ENCODE measurements at regions of chr2 and their contacts with region 1.

Region 1: GRCh38 chr2:25692143-25692542 is 18.8 kb upstream of the DTNB start:
- DNase-seq: peak; percentile 79
- ATAC-seq: peak; percentile 59
- H3K4me3 ChIP-seq: no peak overlapping the region
- H3K27ac ChIP-seq: no peak overlapping the region
- H3K4me1 ChIP-seq: no peaks in the 10 kb centered on the region; the same call in 1 of the 2 replicates
- H3K27me3 ChIP-seq: no peaks in the 10 kb centered on the region
- CTCF ChIP-seq: no peak

Region 2: DNA sequence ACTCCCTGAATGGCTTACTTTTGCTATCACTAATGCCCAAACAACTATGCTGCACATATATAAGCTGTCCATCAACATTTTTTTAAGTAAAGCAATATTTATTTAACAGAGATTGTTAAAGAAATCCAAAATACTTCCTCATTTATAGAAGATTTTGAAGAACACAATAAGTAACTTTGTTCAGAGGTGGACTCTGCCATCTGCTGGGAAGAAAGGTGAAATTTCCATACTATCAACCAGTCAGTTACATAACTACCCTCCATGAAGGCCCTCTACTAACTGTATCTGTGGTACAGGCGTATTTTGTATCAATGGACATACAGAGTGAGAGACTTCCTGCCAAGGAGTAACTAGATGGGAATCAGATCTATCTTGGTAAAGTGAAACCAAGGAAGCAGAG is 124.7 kb before region 1 on chr2:
- CTCF ChIA-PET with region 1: no interaction called
- POLR2A ChIA-PET with region 1: no interaction called
- intact Hi-C with region 1: no loop called
- DNase-seq: peak; percentile 67
- ATAC-seq: peak; percentile 85
- H3K4me3 ChIP-seq: no peak overlapping the region
- H3K27ac ChIP-seq: no peak overlapping the region
- H3K4me1 ChIP-seq: no peaks in the 10 kb centered on the region
- H3K27me3 ChIP-seq: no peaks in the 10 kb centered on the region
- CTCF ChIP-seq: peak; percentile 78

Region 3: DNA sequence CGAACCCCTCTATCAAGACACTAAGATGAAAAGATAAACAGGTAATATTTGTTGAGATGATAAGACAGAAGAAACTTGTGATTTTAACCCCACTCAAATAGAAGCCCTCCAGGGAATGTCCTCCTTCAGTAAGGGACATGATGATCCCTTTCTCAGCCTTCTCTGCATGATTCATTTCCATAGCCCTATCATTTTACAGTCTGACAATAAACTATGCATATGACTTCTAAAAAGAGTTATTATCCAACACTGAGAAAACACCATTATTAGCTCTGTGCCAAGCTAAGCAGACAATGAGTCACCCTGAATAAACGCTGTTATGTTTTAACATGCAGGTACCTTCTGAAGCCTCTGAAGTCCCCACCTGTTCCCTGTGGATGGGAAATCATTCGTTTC is 73.5 kb before region 1 on chr2:
- CTCF ChIA-PET with region 1: no interaction called
- POLR2A ChIA-PET with region 1: interaction called, 32 read pairs
- intact Hi-C with region 1: no loop called
- DNase-seq: peak; percentile 96
- ATAC-seq: peak; percentile 94
- H3K4me3 ChIP-seq: peak overlapping the region; percentile 43
- H3K27ac ChIP-seq: peak overlapping the region; percentile 88
- H3K4me1 ChIP-seq: peaks cover 23% of the 10 kb centered on the region
- H3K27me3 ChIP-seq: no peaks in the 10 kb centered on the region
- CTCF ChIP-seq: no peak

Region 4: GRCh38 chr2:25632396-25632795 is 59.7 kb before region 1 on chr2:
- CTCF ChIA-PET with region 1: no interaction called
- POLR2A ChIA-PET with region 1: no interaction called
- intact Hi-C with region 1: no loop called
- DNase-seq: no peak
- ATAC-seq: no peak
- H3K4me3 ChIP-seq: no peak overlapping the region
- H3K27ac ChIP-seq: no peak overlapping the region
- H3K4me1 ChIP-seq: no peaks in the 10 kb centered on the region
- H3K27me3 ChIP-seq: no peaks in the 10 kb centered on the region
- CTCF ChIP-seq: no peak

Measured in PC-3 (cell line).